ENCODE measurements at regions of chr21 and their contacts with region 1.

Region 1: GRCh38 chr21:26067836-26068594 is 102.6 kb downstream of the APP start:
- DNase-seq: no peak
- ATAC-seq: peak in 3 of 4 donors; percentile 34 to 57 (median 36)
- H3K4me3 ChIP-seq: no peak overlapping the region
- H3K27ac ChIP-seq: no peak overlapping the region
- H3K4me1 ChIP-seq: peaks cover 2 to 50% (median 24%) of the 10 kb centered on the region in 12 donors
- H3K27me3 ChIP-seq: no peaks in the 10 kb centered on the region
- CTCF ChIP-seq: no peak
- POLR2A ChIP-seq: no peak

Region 2: DNA sequence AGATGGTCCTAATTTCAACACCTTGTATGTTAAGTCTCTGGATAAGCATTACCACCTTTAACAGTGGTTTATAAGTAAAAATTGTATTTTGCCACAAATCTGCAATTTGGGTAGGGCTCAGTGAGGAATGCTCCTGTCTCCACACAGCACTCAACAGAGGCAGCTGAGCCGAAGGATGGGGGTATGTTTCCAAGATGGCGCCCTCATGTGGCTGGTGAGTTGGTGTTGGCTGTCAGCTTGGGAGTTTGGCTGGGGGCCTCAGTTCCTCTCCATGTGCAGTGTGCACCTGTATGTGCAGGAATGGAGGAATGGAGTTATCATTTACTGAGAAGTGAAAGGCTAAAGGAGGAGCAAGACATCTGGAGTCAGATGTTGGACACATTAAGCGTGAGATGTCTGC is 196.4 kb before region 1 on chr21:
- intact Hi-C with region 1: no loop called
- DNase-seq: no peak
- ATAC-seq: no peak
- H3K4me3 ChIP-seq: no peak overlapping the region
- H3K27ac ChIP-seq: no peak overlapping the region
- H3K4me1 ChIP-seq: no peaks in the 10 kb centered on the region
- H3K27me3 ChIP-seq: no peaks in the 10 kb centered on the region
- CTCF ChIP-seq: peak in 1 of 12 donors; percentile 9
- POLR2A ChIP-seq: no peak

Region 3: DNA sequence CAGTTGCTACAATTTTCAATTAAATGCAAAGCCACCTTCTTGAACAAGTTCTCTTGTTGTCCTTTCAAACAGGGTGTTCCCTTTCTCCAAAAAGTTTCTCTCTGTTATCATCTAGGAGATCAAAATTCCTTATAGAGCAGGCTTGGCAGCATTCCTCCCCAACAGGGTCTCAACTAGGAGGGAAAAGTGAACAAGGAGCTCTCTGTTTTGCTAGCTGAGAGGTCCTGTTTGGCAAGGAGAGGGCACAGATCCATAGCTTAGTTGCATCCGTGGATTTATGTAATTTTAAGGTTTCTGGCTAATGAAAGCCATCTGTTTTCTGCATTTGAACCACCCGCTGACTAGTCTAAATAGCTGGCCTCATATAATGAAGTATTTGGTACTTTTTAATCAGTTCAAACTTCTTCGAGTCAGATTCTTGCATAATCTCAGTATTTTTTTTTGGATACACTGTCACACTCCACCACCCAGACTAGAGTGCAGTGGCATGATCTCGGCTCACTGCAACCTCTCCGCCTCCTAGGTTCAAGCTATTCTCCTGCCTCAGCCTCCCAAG is 48.5 kb after region 1 on chr21:
- intact Hi-C with region 1: loop called in 1 of 10 experiments (anchors 5 kb)
- DNase-seq: no peak
- ATAC-seq: peak in 2 of 4 donors; percentile 27 to 34
- H3K4me3 ChIP-seq: peak overlapping the region in 1 of 12 donors; percentile 9
- H3K27ac ChIP-seq: peak overlapping the region; percentile 47 to 83 (median 64)
- H3K4me1 ChIP-seq: peaks cover 0 to 53% (median 31%) of the 10 kb centered on the region in 12 donors
- H3K27me3 ChIP-seq: no peaks in the 10 kb centered on the region
- CTCF ChIP-seq: no peak
- POLR2A ChIP-seq: no peak

Measured in heart left ventricle (tissue), 16 donors.